Dorsolateral prefrontal cortex (tissue), 120 donors: ENCODE measurements at regions of chr10 and their contacts with region 1.

Region 1: DNA sequence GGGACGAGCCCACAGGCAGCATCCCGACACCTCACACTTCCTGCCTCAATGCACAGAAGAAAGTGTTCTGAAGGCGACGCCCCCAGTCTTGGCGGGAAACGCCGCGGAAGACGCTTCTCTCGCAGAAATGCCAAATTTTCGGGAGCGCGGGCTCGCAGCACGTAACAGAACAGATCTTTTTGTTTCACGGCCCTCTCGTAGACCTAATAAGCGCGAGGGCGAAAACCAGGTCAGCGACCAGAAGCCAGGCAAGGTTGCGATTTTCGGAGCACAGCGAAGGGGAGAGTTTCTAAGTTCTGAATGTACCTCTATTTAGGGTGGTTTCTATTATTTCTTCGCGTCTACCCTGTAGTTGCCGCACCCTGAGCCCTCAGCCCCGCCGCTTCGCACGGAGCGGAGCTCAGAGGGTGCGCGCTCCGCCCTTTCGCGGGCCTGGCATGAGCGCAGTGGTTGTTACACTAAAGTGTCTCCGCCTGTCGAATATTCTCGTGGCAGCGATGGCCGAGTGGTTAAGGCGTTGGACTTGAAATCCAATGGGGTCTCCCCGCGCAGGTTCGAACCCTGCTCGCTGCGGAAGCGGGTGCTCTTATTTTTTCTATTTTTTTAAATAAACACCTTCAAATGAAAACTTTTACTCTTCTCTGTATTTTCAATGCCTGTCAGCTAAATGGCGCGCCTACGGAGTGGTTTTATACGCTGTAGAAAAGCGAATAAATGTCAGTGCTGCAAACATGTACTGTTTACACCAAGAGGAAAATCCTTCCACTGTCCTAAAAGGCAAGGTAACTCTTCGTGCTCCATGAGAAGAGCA is 68.2 kb upstream of the CTNNA3 start:
- DNase-seq: peak; percentile 90 to 97 (median 94)
- H3K4me3 ChIP-seq: peak overlapping the region; percentile 57 to 98 (median 80)
- H3K27ac ChIP-seq: peak overlapping the region; percentile 85 to 100 (median 98)
- H3K27me3 ChIP-seq: no peaks in the 10 kb centered on the region
- CTCF ChIP-seq: peak in 13 of 56 donors; percentile 5 to 33 (median 9)

Region 2: DNA sequence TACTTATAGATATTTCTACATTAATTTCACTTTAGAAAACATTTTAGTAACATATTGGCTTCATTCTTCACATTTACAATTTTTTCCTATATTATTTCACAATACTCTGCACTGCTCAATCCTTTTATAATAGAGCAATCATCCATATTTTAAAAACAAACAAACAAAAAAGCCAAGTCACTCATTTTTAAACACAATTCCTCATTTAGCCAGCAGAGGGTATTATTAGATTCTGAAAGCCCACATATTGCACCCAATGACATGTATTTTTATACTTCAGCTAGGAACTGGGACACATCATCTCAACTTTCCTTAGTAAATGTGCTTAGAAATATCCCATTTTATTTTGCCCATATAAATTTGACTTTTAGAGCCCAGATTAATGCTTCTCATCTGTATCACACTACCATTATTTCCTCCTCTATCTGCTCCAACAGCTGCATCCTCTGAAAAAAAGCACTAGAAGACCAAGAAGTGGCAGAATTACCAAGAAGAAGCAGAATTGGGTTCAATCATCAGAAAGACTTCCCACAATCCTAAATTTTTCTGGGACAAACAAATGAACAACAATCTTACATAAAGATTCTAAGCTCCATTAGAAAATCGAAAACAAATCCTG is 97.7 kb before region 1 on chr10:
- intact Hi-C with region 1: loop called (anchors 1 to 5 kb)
- DNase-seq: no peak
- H3K4me3 ChIP-seq: peak overlapping the region in 5 of 59 donors; percentile 2 to 74 (median 67)
- H3K27ac ChIP-seq: peak overlapping the region in 58 of 59 donors; percentile 72 to 98 (median 90)
- H3K27me3 ChIP-seq: no peaks in the 10 kb centered on the region
- CTCF ChIP-seq: peak in 55 of 56 donors; percentile 53 to 89 (median 73)

Region 3: GRCh38 chr10:67697724-67698131 is 66.5 kb before region 1 on chr10:
- intact Hi-C with region 1: loop called in 1 of 2 experiments (anchors 2 kb)
- DNase-seq: peak in 1 of 10 donors; percentile 12
- H3K4me3 ChIP-seq: peak overlapping the region in 16 of 59 donors; percentile 18 to 45 (median 25)
- H3K27ac ChIP-seq: peak overlapping the region in 14 of 59 donors; percentile 8 to 68 (median 41)
- H3K27me3 ChIP-seq: peaks cover 0 to 2% (median 0%) of the 10 kb centered on the region in 45 donors
- CTCF ChIP-seq: peak; percentile 43 to 91 (median 74)